ENCODE measurements at regions of chr19 and their contacts with region 1.

Region 1: DNA sequence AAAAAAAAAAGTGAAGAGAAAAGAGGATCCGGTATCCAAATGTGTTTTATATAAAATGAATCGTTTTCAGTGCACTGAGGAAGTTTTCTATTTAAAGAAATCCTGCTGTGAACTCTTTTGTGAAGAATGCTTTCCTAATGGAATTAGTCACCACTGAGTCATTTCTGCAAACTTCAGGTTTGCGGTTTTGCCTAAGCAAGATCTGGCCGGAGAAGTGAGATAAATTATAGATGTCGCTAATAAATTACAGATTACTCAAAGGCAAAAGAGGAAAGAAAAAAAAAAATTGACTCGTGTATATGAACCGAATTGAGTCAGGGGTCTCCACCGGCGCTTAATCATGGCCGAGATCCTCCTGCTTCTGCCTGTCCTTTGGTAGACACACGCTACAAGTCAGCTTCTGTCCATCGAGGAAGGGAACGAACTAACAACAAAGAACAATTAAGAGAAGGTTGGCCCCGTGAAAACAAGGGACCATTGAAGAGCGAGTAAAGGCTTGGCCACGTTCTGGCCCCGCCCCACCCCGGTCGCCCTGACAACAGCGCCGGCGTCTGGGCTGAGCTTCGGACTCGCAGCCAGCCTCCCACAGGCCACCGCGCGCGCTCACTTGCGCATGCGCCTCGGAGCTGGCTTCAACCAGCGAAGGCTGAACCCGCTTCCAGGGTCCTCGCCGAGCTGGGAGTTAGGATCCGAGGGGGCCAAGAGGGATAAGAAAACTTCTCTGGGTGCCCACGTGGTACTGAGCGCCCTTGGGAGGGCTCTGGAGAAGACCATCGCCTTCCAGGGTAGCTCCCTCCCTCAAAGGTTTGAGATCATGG is 33.0 kb upstream of the MRI1 start:
- DNase-seq: peak; percentile 90
- H3K4me3 ChIP-seq: peak overlapping the region; percentile 83
- H3K27ac ChIP-seq: peak overlapping the region; percentile 99
- H3K27me3 ChIP-seq: peaks cover 2% of the 10 kb centered on the region
- CTCF ChIP-seq: no peak

Region 2: DNA sequence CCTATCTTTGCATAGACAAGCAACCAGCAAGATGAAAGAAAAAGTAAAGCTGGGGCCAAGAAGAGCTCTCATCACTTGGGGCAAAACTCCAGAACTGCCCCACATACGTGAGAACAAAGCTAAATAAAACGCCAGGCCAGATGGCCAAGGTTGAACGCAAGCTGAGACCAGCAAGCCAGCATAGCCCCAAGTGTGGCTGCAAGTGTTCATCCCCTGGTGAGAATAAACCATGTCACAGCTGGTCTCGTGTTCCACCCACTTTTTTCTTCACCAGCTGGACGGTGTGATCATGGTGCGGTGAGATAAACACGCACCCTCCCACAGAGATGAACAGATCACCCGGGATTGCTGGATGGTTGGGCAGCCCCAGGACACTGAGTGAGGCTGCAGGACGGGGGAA is 115.5 kb before region 1 on chr19:
- CTCF ChIA-PET with region 1: no interaction called
- POLR2A ChIA-PET with region 1: no interaction called
- DNase-seq: no peak
- H3K4me3 ChIP-seq: no peak overlapping the region
- H3K27ac ChIP-seq: no peak overlapping the region
- H3K27me3 ChIP-seq: no peaks in the 10 kb centered on the region
- CTCF ChIP-seq: no peak

Region 3: DNA sequence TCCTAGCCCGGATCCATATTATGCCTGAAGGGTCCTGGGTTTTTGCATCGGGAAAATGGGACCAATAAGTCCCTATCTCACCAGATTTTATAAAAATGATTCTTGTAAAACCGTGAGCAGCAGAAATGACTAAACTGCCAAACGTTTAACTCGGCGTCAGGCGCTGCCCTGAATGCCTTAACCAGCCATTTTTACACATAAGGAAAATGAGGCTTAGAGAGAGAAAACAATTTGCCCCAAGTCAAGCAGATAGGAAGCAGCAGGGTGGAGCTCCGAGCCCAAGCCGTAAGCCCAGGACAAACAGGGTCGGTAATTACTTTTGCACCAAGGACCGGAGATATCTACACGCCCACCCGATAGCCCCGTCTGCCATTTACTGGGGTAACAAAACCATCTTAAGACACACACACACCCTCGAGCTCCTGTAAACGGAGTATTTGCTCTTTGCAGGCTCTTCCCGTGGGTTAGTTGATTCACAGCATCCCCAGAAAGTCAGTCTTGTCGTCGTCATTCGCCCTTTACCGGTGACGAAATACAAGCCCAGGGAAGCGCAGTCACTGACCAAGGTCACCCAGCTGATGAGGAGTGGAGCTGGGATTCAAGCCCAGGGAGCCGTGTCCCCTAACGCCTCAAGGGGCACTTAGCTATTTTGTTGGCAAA is 16.9 kb after region 1 on chr19:
- CTCF ChIA-PET with region 1: interaction called, 5 read pairs
- POLR2A ChIA-PET with region 1: interaction called, 16 read pairs
- DNase-seq: no peak
- H3K4me3 ChIP-seq: peak overlapping the region; percentile 84
- H3K27ac ChIP-seq: peak overlapping the region; percentile 68
- H3K27me3 ChIP-seq: no peaks in the 10 kb centered on the region
- CTCF ChIP-seq: no peak

Region 4: GRCh38 chr19:14603990-14604387 is 872.6 kb after region 1 on chr19:
- CTCF ChIA-PET with region 1: no interaction called
- POLR2A ChIA-PET with region 1: no interaction called
- DNase-seq: no peak
- H3K4me3 ChIP-seq: no peak overlapping the region
- H3K27ac ChIP-seq: no peak overlapping the region
- H3K27me3 ChIP-seq: no peaks in the 10 kb centered on the region
- CTCF ChIP-seq: no peak

Measured in AG04450 (cell line).